Activated CD8-positive, alpha-beta T cell treated with anti-CD3 and anti-CD28 coated beads, Interleukin-2, amount 10 ng/mL, durations not matched to agents 7 days and 5 days (primary cell): ENCODE measurements at regions of chr3 and their contacts with region 1.

Region 1: DNA sequence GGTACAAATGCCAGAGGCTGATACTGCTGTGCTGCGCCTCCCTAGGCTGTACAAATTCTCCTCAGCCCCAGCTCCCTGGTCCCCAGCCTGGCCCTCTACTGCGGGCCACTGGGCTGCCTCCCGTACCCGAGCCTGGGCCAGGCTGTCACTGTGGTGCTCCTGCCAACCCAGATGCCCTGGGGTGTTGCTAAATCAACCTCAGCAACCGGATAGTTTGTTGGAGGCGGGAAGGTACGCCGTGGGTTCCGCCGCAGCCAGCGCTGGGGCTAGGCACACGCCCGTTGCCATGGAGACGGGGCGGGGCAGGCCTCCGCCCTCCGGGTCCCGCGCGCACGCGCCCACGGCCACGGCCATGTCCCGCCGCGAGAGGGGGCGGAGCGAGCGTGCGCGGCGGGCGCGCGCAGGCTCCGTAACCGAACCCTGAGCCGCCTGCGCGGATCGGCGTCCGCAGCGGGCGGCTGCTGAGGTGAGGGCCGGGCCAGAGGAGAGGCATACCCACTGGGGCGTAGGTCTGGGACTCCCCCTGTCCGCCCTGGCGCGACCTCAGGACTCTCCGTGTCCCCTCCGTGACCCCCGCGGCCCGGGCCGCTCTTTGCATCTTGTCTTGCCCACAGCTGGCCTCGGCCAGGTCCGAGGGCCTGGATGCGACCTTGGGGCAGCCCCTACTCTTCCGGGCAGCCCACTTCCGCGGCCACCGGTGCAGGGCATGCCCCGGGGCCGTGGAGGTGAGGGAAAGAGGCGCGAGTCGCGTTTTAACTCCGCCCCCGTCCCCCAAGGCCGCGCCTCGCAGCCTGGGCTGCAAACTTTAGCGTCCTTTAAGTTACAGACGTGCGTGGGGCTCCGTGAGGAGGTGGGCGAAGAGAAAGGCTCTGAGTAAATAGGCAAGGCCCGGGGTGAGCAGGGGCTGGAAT is at the start of gene TEX264:
- DNase-seq: peak; percentile 94
- ATAC-seq: peak; percentile 80
- H3K4me3 Mint-ChIP-seq: peak within 1 kb of the TSS; percentile 88
- H3K27ac Mint-ChIP-seq: peak within 1 kb of the TSS; percentile 85
- H3K4me1 Mint-ChIP-seq: peaks cover 72% of the 10 kb centered on the region
- H3K27me3 Mint-ChIP-seq: no peaks in the 10 kb centered on the region
- total RNA-seq, gene TEX264: 62.6 to 65.0 TPM

Region 2: DNA sequence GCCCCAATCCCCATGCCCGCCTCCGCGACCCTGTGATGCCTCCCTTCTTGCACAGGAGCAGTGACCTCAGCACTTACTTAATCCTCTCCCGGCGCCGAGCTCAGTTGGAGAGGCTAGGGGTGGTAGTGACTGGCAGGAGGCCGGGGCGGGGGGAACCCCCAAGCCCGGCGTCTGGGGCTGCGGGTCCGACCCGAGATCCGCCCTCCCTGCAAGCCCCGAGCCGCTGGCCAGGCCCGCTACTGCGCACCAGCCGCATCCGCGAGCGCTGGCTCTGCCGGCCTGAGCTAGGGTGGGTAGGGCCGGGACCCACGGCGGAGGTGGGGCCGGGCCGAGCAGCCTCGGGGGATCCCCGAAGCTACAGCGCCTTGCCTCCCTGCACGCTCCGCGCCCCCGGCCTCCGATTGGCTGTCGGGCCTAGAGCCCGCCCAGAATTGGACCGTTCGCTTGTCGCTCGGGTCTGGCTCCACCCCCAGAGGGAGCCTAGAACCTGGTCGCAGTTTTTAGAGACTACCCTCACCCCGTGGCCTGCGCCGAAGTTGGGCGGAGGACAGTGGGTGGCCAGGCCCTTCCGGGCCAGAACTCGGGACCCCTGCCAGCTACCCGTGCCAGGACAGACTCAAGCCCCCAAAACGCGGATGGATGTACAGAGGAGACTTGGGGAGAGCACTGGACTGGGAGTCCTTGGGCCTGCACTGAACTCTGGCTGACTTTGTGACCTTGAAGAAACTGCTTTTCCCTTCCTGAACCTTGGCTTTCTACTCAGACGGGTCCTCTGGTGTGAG is 1103.5 kb before region 1 on chr3 and contains the start of gene C3orf18:
- CTCF ChIA-PET with region 1: no interaction called
- POLR2A ChIA-PET with region 1: no interaction called
- DNase-seq: peak; percentile 98
- ATAC-seq: peak; percentile 82
- H3K4me3 Mint-ChIP-seq: peak within 1 kb of the TSS; percentile 95
- H3K27ac Mint-ChIP-seq: peak within 1 kb of the TSS; percentile 97
- H3K4me1 Mint-ChIP-seq: peaks cover 79% of the 10 kb centered on the region
- H3K27me3 Mint-ChIP-seq: no peaks in the 10 kb centered on the region
- total RNA-seq, gene C3orf18: 58.5 to 61.6 TPM

Region 3: GRCh38 chr3:51391075-51391567 is 280.0 kb before region 1 on chr3 and contains the start of gene RBM15B:
- CTCF ChIA-PET with region 1: interaction called, 22 read pairs
- POLR2A ChIA-PET with region 1: interaction called, 4 read pairs
- DNase-seq: peak; percentile 98
- ATAC-seq: peak; percentile 95
- H3K4me3 Mint-ChIP-seq: peak within 1 kb of the TSS; percentile 83
- H3K27ac Mint-ChIP-seq: peak within 1 kb of the TSS; percentile 94
- H3K4me1 Mint-ChIP-seq: peaks cover 79% of the 10 kb centered on the region
- H3K27me3 Mint-ChIP-seq: no peaks in the 10 kb centered on the region
- total RNA-seq, gene RBM15B: 30.7 to 30.8 TPM

Region 4: GRCh38 chr3:51511000-51511399 is 160.1 kb before region 1 on chr3:
- CTCF ChIA-PET with region 1: interaction called, 21 read pairs
- POLR2A ChIA-PET with region 1: no interaction called
- DNase-seq: no peak
- ATAC-seq: no peak
- H3K4me3 Mint-ChIP-seq: no peak overlapping the region
- H3K27ac Mint-ChIP-seq: no peak overlapping the region
- H3K4me1 Mint-ChIP-seq: peaks cover 23% of the 10 kb centered on the region
- H3K27me3 Mint-ChIP-seq: no peaks in the 10 kb centered on the region

Region 5: DNA sequence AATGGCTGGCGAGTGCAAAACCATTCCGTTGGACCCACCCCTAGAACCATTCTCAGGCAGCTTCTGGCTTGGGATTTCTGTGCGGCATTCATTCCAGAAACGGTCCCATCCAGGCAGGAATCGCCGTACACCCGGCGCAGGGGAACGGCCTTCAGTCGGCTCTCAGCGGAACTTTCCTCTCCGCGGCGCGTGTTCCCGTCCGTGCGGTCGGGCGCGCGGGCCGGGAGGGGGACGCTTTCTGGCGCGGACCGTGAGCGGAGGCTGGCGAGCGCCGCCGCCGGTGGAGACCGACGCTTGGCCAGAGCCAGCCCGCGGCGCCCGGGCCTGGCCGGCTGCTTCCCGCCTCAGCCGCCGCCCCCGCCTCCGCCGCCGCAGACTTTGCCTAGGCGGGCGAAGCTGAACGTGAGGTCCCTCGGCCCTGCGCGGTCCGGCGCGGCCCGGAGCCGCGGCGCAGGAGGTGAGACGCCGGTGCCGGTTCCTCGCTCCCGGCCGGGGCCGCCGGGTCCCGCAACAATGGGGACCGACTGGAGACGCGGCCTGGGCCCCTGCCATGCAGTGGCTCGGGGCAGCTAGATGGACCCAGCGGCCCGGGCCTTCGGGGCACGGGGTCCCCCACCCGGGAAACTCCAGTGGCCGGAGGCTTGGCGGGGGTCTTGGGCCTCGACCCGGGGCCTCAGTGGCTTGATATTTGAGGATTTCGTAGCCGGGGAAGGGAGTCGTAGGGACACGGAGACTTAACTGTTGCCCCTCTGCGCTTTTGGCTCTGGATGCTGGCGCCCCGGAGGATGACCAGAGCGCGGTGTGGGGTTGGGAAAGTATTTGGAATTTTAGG is 132.4 kb before region 1 on chr3 and contains the start of gene RAD54L2:
- CTCF ChIA-PET with region 1: interaction called, 14 read pairs
- POLR2A ChIA-PET with region 1: no interaction called
- DNase-seq: peak; percentile 75
- ATAC-seq: peak; percentile 93
- H3K4me3 Mint-ChIP-seq: peak within 1 kb of the TSS; percentile 86
- H3K27ac Mint-ChIP-seq: peak within 1 kb of the TSS; percentile 84
- H3K4me1 Mint-ChIP-seq: peaks cover 33% of the 10 kb centered on the region
- H3K27me3 Mint-ChIP-seq: no peaks in the 10 kb centered on the region
- total RNA-seq, gene RAD54L2: 28.8 to 28.9 TPM

Region 6: DNA sequence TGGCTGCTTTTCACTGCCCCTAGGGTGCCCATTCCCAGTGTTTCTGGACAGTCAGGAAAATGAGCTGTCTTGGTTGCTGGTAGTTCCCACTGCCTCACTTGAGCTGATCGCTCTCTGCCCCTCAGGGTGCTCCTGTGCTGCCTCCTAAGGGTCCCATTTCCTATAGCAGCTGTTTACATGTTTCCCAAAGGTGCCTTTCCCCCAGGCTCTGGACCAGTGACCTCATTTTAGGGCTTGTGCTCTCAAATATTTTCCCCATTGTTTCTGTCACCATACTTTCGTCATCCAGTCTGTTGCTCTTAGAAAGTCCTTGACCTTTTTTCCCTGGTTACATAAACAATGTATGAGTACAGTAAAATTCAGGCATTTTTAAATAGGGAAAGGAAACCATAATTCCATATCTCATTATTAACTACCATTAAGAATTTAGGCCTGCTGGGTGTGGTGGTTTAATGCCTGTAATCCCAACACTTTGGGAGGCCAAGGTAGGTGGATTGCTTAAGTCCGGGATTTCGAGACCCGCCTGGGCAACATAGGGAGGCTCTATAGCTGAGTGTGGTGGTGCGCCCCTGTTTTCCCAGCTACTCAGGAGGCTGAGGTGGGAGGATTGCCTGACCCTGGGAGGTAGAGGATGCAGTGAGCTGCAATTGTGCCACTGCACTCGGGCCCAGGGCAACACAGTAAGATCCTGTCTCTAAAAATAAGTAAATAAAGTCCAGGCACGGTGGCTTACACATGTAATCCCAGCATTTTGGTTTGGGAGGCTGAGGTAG is 120.8 kb before region 1 on chr3:
- CTCF ChIA-PET with region 1: no interaction called
- POLR2A ChIA-PET with region 1: no interaction called
- DNase-seq: no peak
- ATAC-seq: no peak
- H3K4me3 Mint-ChIP-seq: no peak overlapping the region
- H3K27ac Mint-ChIP-seq: no peak overlapping the region
- H3K4me1 Mint-ChIP-seq: peaks cover 2% of the 10 kb centered on the region
- H3K27me3 Mint-ChIP-seq: no peaks in the 10 kb centered on the region

Region 7: GRCh38 chr3:51637941-51638471 is 33.1 kb before region 1 on chr3:
- CTCF ChIA-PET with region 1: interaction called, 60 read pairs
- POLR2A ChIA-PET with region 1: interaction called, 3 read pairs
- DNase-seq: peak; percentile 69
- ATAC-seq: peak; percentile 82
- H3K4me3 Mint-ChIP-seq: no peak overlapping the region
- H3K27ac Mint-ChIP-seq: no peak overlapping the region
- H3K4me1 Mint-ChIP-seq: no peaks in the 10 kb centered on the region
- H3K27me3 Mint-ChIP-seq: no peaks in the 10 kb centered on the region

Region 8: GRCh38 chr3:51657234-51657633 is 13.8 kb before region 1 on chr3:
- CTCF ChIA-PET with region 1: interaction called, 15 read pairs
- POLR2A ChIA-PET with region 1: no interaction called
- DNase-seq: no peak
- ATAC-seq: no peak
- H3K4me3 Mint-ChIP-seq: no peak overlapping the region
- H3K27ac Mint-ChIP-seq: no peak overlapping the region
- H3K4me1 Mint-ChIP-seq: no peaks in the 10 kb centered on the region
- H3K27me3 Mint-ChIP-seq: no peaks in the 10 kb centered on the region

Region 9: DNA sequence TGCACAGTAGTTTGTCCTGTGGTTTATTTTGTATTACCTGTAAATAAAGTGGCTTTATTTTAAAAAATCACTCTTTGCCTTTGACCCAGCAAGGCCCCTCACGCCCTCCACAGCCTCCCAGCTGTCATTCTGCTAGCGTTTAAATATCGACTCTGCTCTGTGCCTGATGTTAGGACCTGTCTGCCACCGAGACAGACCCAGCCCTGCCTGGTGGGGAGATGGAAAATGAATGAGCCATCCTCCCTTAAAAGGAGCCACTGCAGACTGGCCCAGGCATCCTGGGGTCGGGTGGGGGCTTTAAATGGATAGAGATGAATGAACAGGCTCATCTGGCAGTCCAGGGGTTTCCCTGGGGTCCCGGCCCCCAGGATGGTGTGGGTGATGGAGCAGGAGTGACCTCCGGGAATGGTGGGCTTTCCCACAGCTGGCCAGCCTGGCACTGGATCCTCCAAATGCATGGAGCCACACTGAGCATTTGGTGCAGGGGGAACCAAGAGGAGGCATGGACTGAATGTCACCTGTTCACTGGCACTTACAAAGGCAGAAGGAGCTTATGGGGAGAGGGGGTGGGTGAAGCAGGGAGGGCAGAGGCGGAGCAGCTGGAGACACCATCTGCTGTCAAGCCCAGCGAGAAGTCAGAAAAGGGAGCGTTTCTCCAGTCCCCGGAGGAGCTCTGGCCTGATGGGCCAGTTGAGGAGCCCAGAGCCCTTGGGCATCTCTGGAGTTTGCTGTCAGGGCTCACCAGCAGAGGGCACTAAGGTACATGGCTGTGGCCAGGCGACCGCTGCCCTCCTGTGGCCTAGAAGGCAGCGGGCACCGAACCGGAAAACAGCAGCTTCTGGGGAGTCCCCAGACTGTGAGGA is 47.7 kb after region 1 on chr3:
- CTCF ChIA-PET with region 1: interaction called, 10 read pairs
- POLR2A ChIA-PET with region 1: no interaction called
- DNase-seq: peak; percentile 86
- ATAC-seq: peak; percentile 86
- H3K4me3 Mint-ChIP-seq: no peak overlapping the region
- H3K27ac Mint-ChIP-seq: peak overlapping the region; percentile 36
- H3K4me1 Mint-ChIP-seq: peaks cover 40% of the 10 kb centered on the region
- H3K27me3 Mint-ChIP-seq: no peaks in the 10 kb centered on the region

Region 10: GRCh38 chr3:52090131-52090932 is 419.3 kb after region 1 on chr3:
- CTCF ChIA-PET with region 1: no interaction called
- POLR2A ChIA-PET with region 1: no interaction called
- DNase-seq: no peak
- ATAC-seq: no peak
- H3K4me3 Mint-ChIP-seq: no peak overlapping the region
- H3K27ac Mint-ChIP-seq: no peak overlapping the region
- H3K4me1 Mint-ChIP-seq: peaks cover 36% of the 10 kb centered on the region
- H3K27me3 Mint-ChIP-seq: no peaks in the 10 kb centered on the region